Naive thymus-derived CD4-positive, alpha-beta T cell (primary cell): ENCODE measurements at regions of chr11 and their contacts with region 1.

Region 1: DNA sequence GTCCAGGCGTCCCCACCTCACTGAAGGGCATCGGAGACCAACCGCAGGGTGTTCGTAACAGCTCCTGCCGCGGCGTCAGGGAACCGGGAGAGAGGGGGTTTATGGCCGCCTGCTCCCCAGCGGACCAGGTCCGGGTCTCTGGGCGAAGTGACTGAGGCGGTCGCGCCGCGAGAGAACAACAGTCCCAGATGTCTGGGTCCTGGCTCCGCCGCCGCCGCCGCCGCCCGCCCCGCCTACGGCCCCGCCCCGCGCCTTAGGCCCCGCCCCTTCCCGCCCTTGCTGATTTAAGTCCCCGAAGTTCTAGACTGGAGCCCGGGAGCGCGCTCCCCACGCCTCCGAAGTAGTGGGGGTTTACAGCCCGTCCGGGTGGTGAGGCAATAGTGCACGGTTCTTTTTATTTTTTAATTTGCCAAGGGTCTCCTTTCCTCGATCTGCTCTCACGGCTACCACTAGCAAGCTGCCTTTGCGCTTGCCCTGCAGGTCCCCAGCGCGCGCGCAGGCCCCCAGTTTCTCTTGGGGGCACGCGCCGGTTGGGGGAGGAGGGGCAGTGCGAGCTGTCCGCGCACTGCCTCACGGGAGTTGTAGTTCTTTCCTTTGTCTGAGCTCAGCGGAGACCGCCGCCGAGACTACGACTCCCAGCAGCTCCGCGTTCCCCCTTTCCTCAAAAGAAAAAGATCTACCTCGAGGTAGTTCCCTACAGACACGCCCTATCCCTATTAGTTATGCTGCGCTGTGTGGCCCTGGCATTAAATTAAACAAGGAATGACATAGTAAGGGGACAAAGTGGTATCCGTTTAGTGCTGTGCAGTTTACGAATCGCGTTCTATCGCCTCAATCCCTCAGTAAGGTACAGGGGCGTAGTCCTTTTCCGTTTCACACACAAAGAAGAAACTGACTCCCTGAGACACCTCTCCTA is at the start of gene PGM2L1:
- DNase-seq: peak; percentile 86 to 97 (median 95)
- ATAC-seq: peak; percentile 94
- H3K4me3 ChIP-seq: peak within 1 kb of the TSS; percentile 64
- H3K4me3 Mint-ChIP-seq: peak within 1 kb of the TSS; percentile 95 to 100 (median 99)
- H3K27ac ChIP-seq: peak within 1 kb of the TSS; percentile 75
- H3K27ac Mint-ChIP-seq: peak within 1 kb of the TSS; percentile 93 to 99 (median 98)
- H3K4me1 ChIP-seq: peaks cover 0 to 10% of the 10 kb centered on the region in 2 donors
- H3K4me1 Mint-ChIP-seq: peaks cover 18 to 39% (median 28%) of the 10 kb centered on the region in 7 donors
- H3K27me3 ChIP-seq: no peaks in the 10 kb centered on the region
- H3K27me3 Mint-ChIP-seq: no peaks in the 10 kb centered on the region
- total RNA-seq, gene PGM2L1: 6.5 to 17.7 (median 9.9) TPM

Region 2: DNA sequence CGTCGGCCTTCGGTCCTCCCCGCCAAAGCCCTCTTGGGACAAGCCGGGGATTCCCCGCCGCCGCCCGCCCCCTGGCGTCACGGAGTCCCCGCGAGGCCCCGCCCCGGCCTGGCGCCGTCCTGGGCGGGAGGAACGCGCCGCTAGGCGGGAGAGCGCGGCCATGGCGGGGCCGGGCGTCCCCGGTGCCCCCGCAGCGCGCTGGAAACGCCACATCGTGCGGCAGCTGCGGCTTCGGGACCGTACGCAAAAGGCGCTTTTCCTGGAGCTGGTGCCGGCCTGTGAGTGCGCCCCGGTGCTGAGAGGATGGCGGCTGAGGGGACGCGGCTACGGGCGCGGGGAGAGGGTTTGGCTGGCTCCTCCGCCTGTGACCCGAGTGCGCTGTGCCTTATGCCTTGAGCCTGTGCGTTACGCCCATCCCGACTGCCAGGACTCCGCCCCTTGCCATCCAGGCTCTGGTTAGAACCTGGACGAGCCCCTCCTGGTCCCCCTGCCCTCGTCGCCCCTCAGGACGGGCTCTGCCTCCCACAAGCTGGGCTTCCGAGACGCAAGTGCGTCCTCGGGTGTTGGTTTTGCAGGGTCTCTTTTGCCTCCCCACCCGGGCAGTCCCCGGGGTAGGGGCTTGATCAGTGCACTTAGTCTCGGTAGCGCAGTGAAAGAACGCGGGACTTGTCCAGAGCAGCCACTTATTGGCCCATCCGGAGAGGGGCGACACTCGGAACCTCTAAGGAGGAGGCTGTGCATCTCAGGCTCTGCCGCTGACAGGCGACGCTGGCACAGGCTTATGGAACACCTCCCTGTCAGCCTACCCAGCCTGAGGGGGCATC is 1584.0 kb before region 1 on chr11 and contains the start of gene ATG16L2:
- CTCF ChIA-PET with region 1: no interaction called
- POLR2A ChIA-PET with region 1: no interaction called
- intact Hi-C with region 1: loop called in 1 of 2 experiments (anchors 5 kb)
- DNase-seq: peak in 8 of 9 donors; percentile 53 to 96 (median 92)
- ATAC-seq: peak; percentile 89
- H3K4me3 ChIP-seq: peak within 1 kb of the TSS; percentile 89
- H3K4me3 Mint-ChIP-seq: peak within 1 kb of the TSS; percentile 97 to 99 (median 98)
- H3K27ac ChIP-seq: peak within 1 kb of the TSS; percentile 100
- H3K27ac Mint-ChIP-seq: peak within 1 kb of the TSS; percentile 86 to 99 (median 98)
- H3K4me1 ChIP-seq: peaks cover 18 to 23% of the 10 kb centered on the region in 2 donors
- H3K4me1 Mint-ChIP-seq: peaks cover 31 to 67% (median 52%) of the 10 kb centered on the region in 7 donors
- H3K27me3 ChIP-seq: no peaks in the 10 kb centered on the region
- H3K27me3 Mint-ChIP-seq: no peaks in the 10 kb centered on the region
- total RNA-seq, gene ATG16L2: 99.5 to 199 (median 166) TPM

Region 3: DNA sequence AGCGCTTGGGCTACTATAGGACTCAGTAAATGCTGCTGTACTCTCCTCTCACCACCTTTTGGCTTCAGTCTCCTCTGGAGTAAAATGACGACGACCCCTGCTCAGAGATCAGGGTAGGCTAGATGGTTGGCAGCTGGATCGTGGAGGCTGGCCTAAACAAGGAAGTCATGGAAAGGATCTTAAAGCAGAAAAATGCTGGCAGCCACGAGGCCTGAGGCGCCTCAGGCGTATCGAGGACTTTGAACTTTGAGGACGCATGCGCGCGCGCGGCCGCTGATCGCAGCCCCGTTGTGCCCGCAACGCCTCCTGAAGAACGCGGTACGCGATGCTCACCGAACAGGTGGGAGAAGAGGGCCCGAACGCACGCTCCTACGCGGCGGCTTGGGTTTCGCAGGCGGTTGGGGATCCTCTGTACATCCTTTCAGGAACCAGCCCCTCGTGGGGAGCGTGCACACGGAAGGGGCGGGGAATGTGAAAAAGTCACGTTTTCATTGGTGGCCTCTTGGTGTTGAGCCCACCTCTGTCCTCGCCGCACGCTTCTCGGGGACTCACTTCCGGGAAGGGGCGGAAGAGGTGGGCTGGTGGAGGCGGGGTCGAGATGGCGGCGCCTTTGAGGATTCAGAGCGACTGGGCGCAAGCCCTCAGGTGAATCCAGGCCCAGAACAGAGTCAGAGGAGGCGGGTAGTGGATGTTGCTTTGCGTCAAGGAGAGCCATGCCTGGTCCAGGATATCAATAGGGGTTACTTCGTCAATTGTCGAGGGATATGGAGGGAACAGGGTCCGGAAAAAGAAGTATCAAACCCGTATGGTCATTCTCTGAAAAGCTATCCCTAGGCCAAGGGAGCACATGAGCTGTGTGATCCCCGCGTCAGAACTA is 521.8 kb before region 1 on chr11 and contains the starts of genes COA4 and PAAF1:
- CTCF ChIA-PET with region 1: no interaction called
- POLR2A ChIA-PET with region 1: no interaction called
- intact Hi-C with region 1: loop called in 1 of 2 experiments (anchors 2 kb)
- DNase-seq: peak; percentile 72 to 95 (median 94)
- ATAC-seq: peak; percentile 99
- H3K4me3 ChIP-seq: peak within 1 kb of the TSS; percentile 94
- H3K4me3 Mint-ChIP-seq: peak within 1 kb of the TSS; percentile 94 to 98 (median 96)
- H3K27ac ChIP-seq: peak within 1 kb of the TSS; percentile 88
- H3K27ac Mint-ChIP-seq: peak within 1 kb of the TSS; percentile 92 to 100 (median 97)
- H3K4me1 ChIP-seq: peaks cover 17 to 19% of the 10 kb centered on the region in 2 donors
- H3K4me1 Mint-ChIP-seq: peaks cover 20 to 55% (median 43%) of the 10 kb centered on the region in 7 donors
- H3K27me3 ChIP-seq: no peaks in the 10 kb centered on the region
- H3K27me3 Mint-ChIP-seq: no peaks in the 10 kb centered on the region
- total RNA-seq, gene COA4: 29.1 to 75.0 (median 58.2) TPM
- total RNA-seq, gene PAAF1: 12.4 to 22.7 (median 20.3) TPM

Region 4: DNA sequence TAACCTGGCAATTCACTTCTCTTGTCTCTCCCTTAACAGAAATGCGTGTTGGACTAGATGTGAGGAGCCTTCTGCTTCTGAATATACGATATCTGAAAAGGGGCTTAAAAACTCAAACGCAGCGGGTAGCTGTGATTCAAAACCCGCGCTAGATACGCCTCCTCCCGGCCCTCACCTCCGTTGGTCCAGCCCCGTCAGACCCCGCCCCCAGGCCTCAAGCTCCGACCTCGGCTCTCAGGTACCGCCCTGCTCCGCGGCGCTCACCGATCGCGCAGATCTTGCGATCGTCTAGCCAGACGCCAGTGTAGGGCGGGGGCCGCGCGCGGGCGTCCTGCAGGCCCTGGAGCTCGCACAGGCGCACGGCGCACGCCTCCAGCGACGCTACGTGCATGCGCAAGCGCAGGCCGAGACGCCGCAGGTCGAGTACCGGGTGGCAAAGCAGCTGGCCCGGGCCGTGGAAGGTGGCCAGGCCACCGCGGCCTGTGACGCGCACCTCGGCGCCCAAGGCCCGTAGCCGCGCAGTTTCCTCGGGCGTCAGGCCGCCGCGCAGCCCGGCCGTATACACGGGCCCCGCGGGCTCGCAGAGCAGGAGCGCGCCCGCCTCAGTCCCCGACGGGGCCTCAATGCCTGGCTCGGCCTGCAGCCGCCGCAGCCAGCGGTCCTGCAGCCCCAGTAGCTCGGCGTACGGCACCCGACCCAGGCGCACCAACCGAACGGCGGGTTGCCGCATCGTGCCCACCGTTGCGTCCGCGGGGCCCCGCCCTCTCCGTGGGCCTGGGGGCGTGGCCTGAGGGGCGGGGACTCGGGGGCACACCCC is 94.7 kb after region 1 on chr11 and contains the start of gene LIPT2:
- CTCF ChIA-PET with region 1: interaction called, 5 read pairs
- POLR2A ChIA-PET with region 1: interaction called, 20 read pairs
- intact Hi-C with region 1: loop called (anchors 1 kb)
- DNase-seq: peak; percentile 92 to 98 (median 96)
- ATAC-seq: peak; percentile 97
- H3K4me3 ChIP-seq: peak within 1 kb of the TSS; percentile 90
- H3K4me3 Mint-ChIP-seq: peak within 1 kb of the TSS; percentile 74 to 92 (median 86)
- H3K27ac ChIP-seq: peak within 1 kb of the TSS; percentile 95
- H3K27ac Mint-ChIP-seq: peak within 1 kb of the TSS; percentile 73 to 96 (median 89)
- H3K4me1 ChIP-seq: peaks cover 8 to 10% of the 10 kb centered on the region in 2 donors
- H3K4me1 Mint-ChIP-seq: peaks cover 14 to 43% (median 28%) of the 10 kb centered on the region in 7 donors
- H3K27me3 ChIP-seq: no peaks in the 10 kb centered on the region
- H3K27me3 Mint-ChIP-seq: no peaks in the 10 kb centered on the region
- total RNA-seq, gene LIPT2: 1.9 to 18.2 (median 9.3) TPM

Region 5: DNA sequence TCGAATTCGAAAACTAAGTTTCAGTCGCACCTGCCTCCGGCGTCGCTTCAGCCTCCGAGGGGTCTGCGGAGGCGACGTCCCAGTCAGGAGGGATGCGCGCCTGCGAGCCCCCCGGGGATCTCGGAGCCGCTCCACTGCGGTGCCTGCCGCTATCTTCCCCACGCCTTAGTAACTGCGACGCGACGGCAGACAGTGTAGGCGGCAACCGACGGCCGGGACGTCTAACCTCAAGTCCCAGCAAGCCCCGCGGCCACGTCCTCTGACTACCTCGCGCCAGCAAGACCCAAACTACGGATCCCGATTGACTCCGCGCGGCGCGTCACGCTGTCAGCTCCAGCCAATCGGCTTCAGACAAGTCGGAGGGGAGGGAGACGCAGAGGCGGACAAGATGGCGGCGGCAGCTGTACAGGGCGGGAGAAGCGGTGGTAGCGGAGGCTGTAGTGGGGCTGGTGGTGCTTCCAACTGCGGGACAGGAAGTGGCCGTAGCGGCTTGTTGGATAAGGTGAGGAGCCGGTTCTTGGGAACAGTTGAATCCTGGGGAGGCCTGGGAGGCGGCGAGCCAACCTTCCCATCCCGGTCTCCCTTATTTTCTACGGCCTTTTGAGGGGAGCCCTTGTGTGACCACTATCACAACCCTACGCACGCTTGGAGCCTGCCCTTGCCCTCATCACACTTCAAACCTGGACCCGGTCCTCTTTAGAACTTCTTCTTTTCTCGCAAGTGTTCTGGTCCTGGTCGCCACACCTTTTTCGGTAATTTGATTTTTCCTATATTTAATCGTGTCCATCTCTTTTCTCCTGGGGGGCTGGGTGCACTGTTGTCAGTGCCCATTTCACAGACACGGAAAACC is 550.6 kb after region 1 on chr11 and contains the starts of genes SPCS2 and XRRA1:
- CTCF ChIA-PET with region 1: no interaction called
- POLR2A ChIA-PET with region 1: no interaction called
- intact Hi-C with region 1: loop called in 1 of 2 experiments (anchors 1 kb)
- DNase-seq: peak; percentile 87 to 98 (median 97)
- ATAC-seq: peak; percentile 99
- H3K4me3 ChIP-seq: peak within 1 kb of the TSS; percentile 99
- H3K4me3 Mint-ChIP-seq: peak within 1 kb of the TSS; percentile 95 to 99 (median 96)
- H3K27ac ChIP-seq: peak within 1 kb of the TSS; percentile 78
- H3K27ac Mint-ChIP-seq: peak within 1 kb of the TSS; percentile 85 to 99 (median 96)
- H3K4me1 ChIP-seq: peaks cover 16 to 21% of the 10 kb centered on the region in 2 donors
- H3K4me1 Mint-ChIP-seq: peaks cover 30 to 86% (median 55%) of the 10 kb centered on the region in 7 donors
- H3K27me3 ChIP-seq: no peaks in the 10 kb centered on the region
- H3K27me3 Mint-ChIP-seq: no peaks in the 10 kb centered on the region
- total RNA-seq, gene SPCS2: 53.9 to 211 (median 87.5) TPM
- total RNA-seq, gene XRRA1: 11.3 to 20.8 (median 20.3) TPM

Region 6: DNA sequence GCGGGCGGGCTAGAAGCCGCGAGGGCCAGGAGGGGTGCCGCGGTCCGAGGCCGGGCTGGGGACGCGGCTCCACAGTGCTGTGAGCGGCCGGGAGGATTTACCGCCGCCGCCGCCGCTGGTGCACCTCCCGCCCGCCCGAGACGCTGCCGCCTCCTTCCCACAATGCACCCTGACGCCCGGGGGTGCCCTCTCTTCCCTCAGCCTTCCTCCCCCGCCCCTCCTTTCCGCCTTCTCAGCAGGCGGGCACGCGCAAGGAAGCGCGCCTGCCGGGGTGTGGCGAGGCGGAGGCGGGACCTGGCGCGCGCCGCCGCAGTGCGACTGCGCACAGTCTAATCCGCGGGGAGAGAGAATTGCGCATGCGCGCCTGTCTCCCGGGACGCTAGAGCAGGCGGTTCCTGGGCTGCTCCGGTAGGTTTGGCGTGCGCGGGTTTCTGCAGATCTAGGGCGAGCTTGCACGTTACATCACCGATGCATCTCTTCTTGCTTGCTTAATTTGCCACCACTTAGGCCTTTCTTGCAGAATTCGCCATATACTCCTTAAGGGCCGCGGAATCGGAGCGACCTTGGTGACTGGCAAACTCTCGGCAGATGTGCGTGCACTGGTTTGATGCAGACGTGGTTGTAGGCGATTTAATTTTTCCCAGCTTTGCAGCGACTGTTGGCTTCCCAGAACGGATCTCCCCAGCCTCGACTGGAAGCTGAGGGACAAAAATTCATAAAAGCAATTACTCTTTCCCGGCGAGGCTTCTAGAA is 1982.6 kb after region 1 on chr11 and contains the starts of genes GVQW3 and THAP12:
- CTCF ChIA-PET with region 1: no interaction called
- POLR2A ChIA-PET with region 1: no interaction called
- intact Hi-C with region 1: loop called in 1 of 2 experiments (anchors 5 kb)
- DNase-seq: peak; percentile 96 to 99 (median 98)
- ATAC-seq: peak; percentile 96
- H3K4me3 ChIP-seq: peak within 1 kb of the TSS; percentile 86
- H3K4me3 Mint-ChIP-seq: peak within 1 kb of the TSS; percentile 92 to 98 (median 97)
- H3K27ac ChIP-seq: peak within 1 kb of the TSS; percentile 72
- H3K27ac Mint-ChIP-seq: peak within 1 kb of the TSS; percentile 75 to 98 (median 92)
- H3K4me1 ChIP-seq: peaks cover 22 to 43% of the 10 kb centered on the region in 2 donors
- H3K4me1 Mint-ChIP-seq: peaks cover 51 to 76% (median 69%) of the 10 kb centered on the region in 7 donors
- H3K27me3 ChIP-seq: no peaks in the 10 kb centered on the region
- H3K27me3 Mint-ChIP-seq: no peaks in the 10 kb centered on the region
- total RNA-seq, gene GVQW3: 3.6 to 9.1 (median 6.7) TPM
- total RNA-seq, gene THAP12: 40.3 to 57.9 (median 51.1) TPM